CD4-positive, alpha-beta T cell (primary cell): ENCODE measurements at regions of chr1 and their contacts with region 1.

Region 1: GRCh38 chr1:221753828-221754188 is 11.9 kb upstream of the DUSP10 start:
- DNase-seq: no peak
- ATAC-seq: no peak
- H3K4me3 ChIP-seq: no peak overlapping the region
- H3K4me3 Mint-ChIP-seq: no peak overlapping the region
- H3K27ac ChIP-seq: no peak overlapping the region
- H3K27ac Mint-ChIP-seq: no peak overlapping the region
- H3K4me1 ChIP-seq: no peaks in the 10 kb centered on the region
- H3K4me1 Mint-ChIP-seq: peaks cover 12% of the 10 kb centered on the region
- H3K27me3 ChIP-seq: peaks cover 0 to 5% of the 10 kb centered on the region in 2 experiments
- H3K27me3 Mint-ChIP-seq: no peaks in the 10 kb centered on the region
- CTCF ChIP-seq: no peak

Region 2: GRCh38 chr1:221768443-221769063 is 14.7 kb after region 1 on chr1:
- CTCF ChIA-PET with region 1: no interaction called
- POLR2A ChIA-PET with region 1: no interaction called
- intact Hi-C with region 1: loop called in 1 of 2 experiments (anchors 1 kb)
- DNase-seq: peak in 2 of 14 experiments; percentile 12 to 28
- ATAC-seq: no peak
- H3K4me3 ChIP-seq: no peak overlapping the region
- H3K4me3 Mint-ChIP-seq: no peak overlapping the region
- H3K27ac ChIP-seq: no peak overlapping the region
- H3K27ac Mint-ChIP-seq: no peak overlapping the region
- H3K4me1 ChIP-seq: no peaks in the 10 kb centered on the region
- H3K4me1 Mint-ChIP-seq: peaks cover 5% of the 10 kb centered on the region
- H3K27me3 ChIP-seq: no peaks in the 10 kb centered on the region
- H3K27me3 Mint-ChIP-seq: no peaks in the 10 kb centered on the region
- CTCF ChIP-seq: no peak

Region 3: GRCh38 chr1:222288040-222288439 is 534.2 kb after region 1 on chr1:
- CTCF ChIA-PET with region 1: no interaction called
- POLR2A ChIA-PET with region 1: no interaction called
- intact Hi-C with region 1: no loop called
- DNase-seq: peak in 3 of 14 experiments; percentile 9 to 37 (median 29)
- ATAC-seq: no peak
- H3K4me3 ChIP-seq: no peak overlapping the region
- H3K4me3 Mint-ChIP-seq: no peak overlapping the region
- H3K27ac ChIP-seq: no peak overlapping the region
- H3K27ac Mint-ChIP-seq: no peak overlapping the region
- H3K4me1 ChIP-seq: no peaks in the 10 kb centered on the region
- H3K4me1 Mint-ChIP-seq: no peaks in the 10 kb centered on the region
- H3K27me3 ChIP-seq: no peaks in the 10 kb centered on the region
- H3K27me3 Mint-ChIP-seq: no peaks in the 10 kb centered on the region
- CTCF ChIP-seq: no peak